GM10248 (cell line): ENCODE measurements at regions of chr6 and their contacts with region 1.

Region 1: GRCh38 chr6:160766989-160767660 is 65.1 kb downstream of the PLG start:
- DNase-seq: peak; percentile 75
- CTCF ChIP-seq: peak; percentile 85

Region 2: GRCh38 chr6:160750276-160750689 is 16.8 kb before region 1 on chr6:
- CTCF ChIA-PET with region 1: interaction called, 35 read pairs
- POLR2A ChIA-PET with region 1: no interaction called
- DNase-seq: peak; percentile 35
- CTCF ChIP-seq: peak; percentile 48

Region 3: GRCh38 chr6:160756871-160757270 is 10.3 kb before region 1 on chr6:
- CTCF ChIA-PET with region 1: interaction called, 35 read pairs
- POLR2A ChIA-PET with region 1: no interaction called
- DNase-seq: no peak
- CTCF ChIP-seq: no peak

Region 4: GRCh38 chr6:160791459-160791858 is 24.3 kb after region 1 on chr6:
- CTCF ChIA-PET with region 1: interaction called, 16 read pairs
- POLR2A ChIA-PET with region 1: no interaction called
- DNase-seq: no peak
- CTCF ChIP-seq: no peak

Region 5: GRCh38 chr6:160845748-160846147 is 78.6 kb after region 1 on chr6:
- CTCF ChIA-PET with region 1: no interaction called
- POLR2A ChIA-PET with region 1: no interaction called
- DNase-seq: no peak
- CTCF ChIP-seq: no peak